T-cell (primary cell): ENCODE measurements at regions of chr15 and their contacts with region 1.

Region 1: DNA sequence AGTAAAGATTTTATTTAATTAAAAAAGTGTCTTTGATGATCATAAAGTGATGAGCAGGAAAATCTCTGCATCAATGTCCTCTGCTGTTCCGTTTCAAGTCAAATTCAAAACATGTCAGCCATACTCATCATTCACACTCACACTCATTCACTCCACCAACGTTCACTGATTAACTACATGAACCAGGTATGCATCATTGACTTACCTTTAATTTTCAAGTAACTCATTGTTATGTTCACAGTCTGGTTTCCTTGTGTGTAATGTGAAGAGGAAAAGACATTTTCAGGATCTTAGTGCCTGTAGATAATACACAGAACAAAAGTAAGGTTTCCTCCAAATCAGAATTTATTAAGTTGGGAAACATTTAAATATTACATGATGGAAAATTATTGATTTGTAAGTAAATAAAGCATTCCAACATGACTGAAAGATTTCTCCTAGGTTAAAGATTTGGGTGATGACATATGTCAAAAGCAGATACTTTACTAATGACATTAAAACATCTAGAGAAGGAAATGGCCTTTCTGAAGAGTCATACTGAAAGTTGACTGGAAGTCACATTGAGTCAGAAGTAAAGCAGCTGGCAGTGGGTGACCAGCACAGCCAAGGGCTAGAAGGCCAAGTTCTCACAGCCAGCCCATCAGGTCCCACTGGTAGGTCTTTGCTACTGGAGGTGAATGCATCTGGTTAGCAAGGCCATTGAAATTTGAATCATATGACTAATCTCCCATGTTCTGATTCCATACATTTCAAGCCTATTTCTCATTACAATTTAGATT is 251.9 kb downstream of the CDIN1 start:
- DNase-seq: no peak
- ATAC-seq: no peak
- H3K4me3 ChIP-seq: no peak overlapping the region
- H3K4me3 Mint-ChIP-seq: no peak overlapping the region
- H3K27ac ChIP-seq: no peak overlapping the region
- H3K27ac Mint-ChIP-seq: no peak overlapping the region
- H3K4me1 ChIP-seq: no peaks in the 10 kb centered on the region
- H3K4me1 Mint-ChIP-seq: no peaks in the 10 kb centered on the region
- H3K27me3 ChIP-seq: no peaks in the 10 kb centered on the region
- H3K27me3 Mint-ChIP-seq: peaks cover 2 to 6% of the 10 kb centered on the region in 2 donors

Region 2: GRCh38 chr15:35181538-35181937 is 1649.8 kb before region 1 on chr15:
- CTCF ChIA-PET with region 1: no interaction called
- POLR2A ChIA-PET with region 1: interaction called in 1 of 2 experiments, 14 read pairs
- DNase-seq: no peak
- ATAC-seq: no peak
- H3K4me3 ChIP-seq: no peak overlapping the region
- H3K4me3 Mint-ChIP-seq: no peak overlapping the region
- H3K27ac ChIP-seq: no peak overlapping the region
- H3K27ac Mint-ChIP-seq: no peak overlapping the region
- H3K4me1 ChIP-seq: no peaks in the 10 kb centered on the region
- H3K4me1 Mint-ChIP-seq: peaks cover 0 to 2% (median 0%) of the 10 kb centered on the region in 3 donors
- H3K27me3 ChIP-seq: no peaks in the 10 kb centered on the region
- H3K27me3 Mint-ChIP-seq: no peaks in the 10 kb centered on the region